ENCODE measurements at regions of chr4 and their contacts with region 1.

Region 1: DNA sequence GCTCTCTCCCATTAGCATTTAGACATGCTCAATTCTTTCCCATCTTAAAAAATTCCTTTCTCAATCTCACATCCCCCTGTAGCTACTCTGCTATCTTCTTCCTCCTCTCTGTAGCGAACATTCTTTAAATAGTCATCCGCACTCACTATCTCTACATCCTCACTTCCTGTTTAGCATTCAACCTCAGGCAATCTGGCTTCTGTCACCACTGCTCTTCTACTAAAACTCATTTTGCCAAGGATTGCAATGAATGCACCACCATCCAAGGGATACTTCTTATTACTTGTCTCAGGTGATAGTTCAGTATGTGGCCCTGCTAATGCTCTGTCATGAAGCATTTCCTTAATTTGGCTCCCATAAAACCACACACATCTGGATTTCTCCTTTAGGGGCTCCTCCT is 10.9 kb upstream of the TET2 start:
- DNase-seq: no peak
- H3K4me3 ChIP-seq: no peak overlapping the region
- H3K27ac ChIP-seq: no peak overlapping the region
- H3K4me1 ChIP-seq: peaks cover 7% of the 10 kb centered on the region; the same call in 1 of the 2 replicates
- H3K27me3 ChIP-seq: no peaks in the 10 kb centered on the region

Region 2: GRCh38 chr4:105274504-105274903 is 138.7 kb after region 1 on chr4:
- in situ Hi-C with region 1: no loop called
- DNase-seq: no peak
- H3K4me3 ChIP-seq: no peak overlapping the region
- H3K27ac ChIP-seq: no peak overlapping the region
- H3K4me1 ChIP-seq: no peaks in the 10 kb centered on the region
- H3K27me3 ChIP-seq: no peaks in the 10 kb centered on the region

Region 3: GRCh38 chr4:105461221-105461620 is 325.4 kb after region 1 on chr4:
- in situ Hi-C with region 1: loop called (anchors 10 kb)
- DNase-seq: no peak
- H3K4me3 ChIP-seq: no peak overlapping the region
- H3K27ac ChIP-seq: no peak overlapping the region
- H3K4me1 ChIP-seq: peaks cover 7% of the 10 kb centered on the region; the same call in 1 of the 2 replicates
- H3K27me3 ChIP-seq: no peaks in the 10 kb centered on the region